Caco-2 (cell line): ENCODE measurements at regions of chr18 and their contacts with region 1.

Region 1: GRCh38 chr18:36075903-36076579 is 8.7 kb upstream of the RPRD1A start:
- DNase-seq: no peak
- H3K4me3 ChIP-seq: no peak overlapping the region
- H3K4me3 Mint-ChIP-seq: no peak overlapping the region
- H3K27ac Mint-ChIP-seq: no peak overlapping the region
- H3K4me1 ChIP-seq: no peaks in the 10 kb centered on the region
- H3K4me1 Mint-ChIP-seq: no peaks in the 10 kb centered on the region
- H3K27me3 ChIP-seq: no peaks in the 10 kb centered on the region
- H3K27me3 Mint-ChIP-seq: no peaks in the 10 kb centered on the region
- CTCF ChIP-seq: no peak

Region 2: GRCh38 chr18:36025025-36025424 is 51.0 kb before region 1 on chr18:
- CTCF ChIA-PET with region 1: interaction called, 6 read pairs
- POLR2A ChIA-PET with region 1: no interaction called
- intact Hi-C with region 1: loop called (anchors 5 kb)
- DNase-seq: no peak
- H3K4me3 ChIP-seq: no peak overlapping the region
- H3K4me3 Mint-ChIP-seq: no peak overlapping the region
- H3K27ac Mint-ChIP-seq: no peak overlapping the region
- H3K4me1 ChIP-seq: no peaks in the 10 kb centered on the region
- H3K4me1 Mint-ChIP-seq: no peaks in the 10 kb centered on the region
- H3K27me3 ChIP-seq: no peaks in the 10 kb centered on the region
- H3K27me3 Mint-ChIP-seq: no peaks in the 10 kb centered on the region
- CTCF ChIP-seq: no peak

Region 3: GRCh38 chr18:36255072-36255698 is 179.1 kb after region 1 on chr18:
- CTCF ChIA-PET with region 1: no interaction called
- POLR2A ChIA-PET with region 1: no interaction called
- intact Hi-C with region 1: no loop called
- DNase-seq: no peak
- H3K4me3 ChIP-seq: no peak overlapping the region
- H3K4me3 Mint-ChIP-seq: no peak overlapping the region
- H3K27ac Mint-ChIP-seq: no peak overlapping the region
- H3K4me1 ChIP-seq: no peaks in the 10 kb centered on the region
- H3K4me1 Mint-ChIP-seq: no peaks in the 10 kb centered on the region
- H3K27me3 ChIP-seq: no peaks in the 10 kb centered on the region
- H3K27me3 Mint-ChIP-seq: no peaks in the 10 kb centered on the region
- CTCF ChIP-seq: no peak